Naive thymus-derived CD4-positive, alpha-beta T cell (primary cell): ENCODE measurements at regions of chr1 and their contacts with region 1.

Region 1: GRCh38 chr1:92960395-92961130 is 699 bp downstream of the DIPK1A start:
- DNase-seq: peak in 8 of 9 donors; percentile 57 to 85 (median 76)
- ATAC-seq: peak; percentile 65
- H3K4me3 ChIP-seq: peak overlapping the region; percentile 58
- H3K4me3 Mint-ChIP-seq: peak overlapping the region in 9 of 10 donors; percentile 86 to 97 (median 90)
- H3K27ac ChIP-seq: peak overlapping the region; percentile 100
- H3K27ac Mint-ChIP-seq: peak overlapping the region; percentile 95 to 99 (median 98)
- H3K4me1 ChIP-seq: peaks cover 39 to 55% of the 10 kb centered on the region in 2 donors
- H3K4me1 Mint-ChIP-seq: peaks cover 37 to 46% (median 41%) of the 10 kb centered on the region in 7 donors
- H3K27me3 ChIP-seq: no peaks in the 10 kb centered on the region
- H3K27me3 Mint-ChIP-seq: no peaks in the 10 kb centered on the region

Region 2: DNA sequence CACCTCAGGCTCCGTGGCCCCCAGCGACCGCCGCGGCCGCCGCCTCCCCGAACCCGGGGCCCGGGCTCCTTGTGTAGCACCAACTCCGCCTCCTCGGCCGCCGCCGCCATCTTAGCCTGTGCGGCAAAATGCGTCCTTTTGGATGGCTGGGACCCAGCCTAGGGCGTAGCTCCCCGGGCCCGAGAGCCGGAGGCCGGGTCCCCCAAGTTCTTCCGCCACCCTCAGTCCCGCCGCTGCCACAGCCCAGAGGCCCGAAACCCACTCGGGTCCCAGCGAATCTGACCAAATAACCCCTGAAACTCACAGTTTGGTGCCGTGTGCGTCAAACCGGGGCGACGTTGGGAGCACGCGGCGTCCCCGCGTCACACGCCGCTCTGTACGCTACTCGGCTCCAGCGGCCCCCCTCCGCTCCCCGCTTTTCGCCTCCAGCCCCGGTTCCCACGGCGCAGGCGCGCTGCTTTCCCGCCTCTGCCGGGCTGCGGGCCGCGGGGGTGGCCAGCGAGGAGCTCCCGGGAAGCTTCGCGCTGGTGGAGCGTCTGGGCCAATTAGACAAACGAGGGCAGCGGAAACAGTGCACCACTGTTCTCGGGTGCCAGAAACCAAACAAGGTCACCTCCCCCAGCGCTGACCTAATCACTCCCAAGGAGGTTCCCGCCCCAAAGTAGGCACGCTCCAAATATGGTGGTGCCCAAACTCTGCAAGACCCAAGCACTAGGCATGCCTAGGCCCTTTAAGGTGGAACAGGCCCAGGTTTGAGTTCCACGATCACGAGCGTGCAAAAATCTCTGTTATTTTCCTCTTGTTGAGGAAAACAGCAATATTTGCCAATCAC is 1938.7 kb before region 1 on chr1 and contains the start of gene ZNF644:
- CTCF ChIA-PET with region 1: no interaction called
- POLR2A ChIA-PET with region 1: no interaction called
- intact Hi-C with region 1: loop called in 1 of 2 experiments (anchors 5 kb)
- DNase-seq: peak; percentile 81 to 95 (median 93)
- ATAC-seq: peak; percentile 91
- H3K4me3 ChIP-seq: peak within 1 kb of the TSS; percentile 62
- H3K4me3 Mint-ChIP-seq: peak within 1 kb of the TSS; percentile 90 to 97 (median 96)
- H3K27ac ChIP-seq: peak within 1 kb of the TSS; percentile 99
- H3K27ac Mint-ChIP-seq: peak within 1 kb of the TSS; percentile 95 to 100 (median 98)
- H3K4me1 ChIP-seq: peaks cover 37 to 45% of the 10 kb centered on the region in 2 donors
- H3K4me1 Mint-ChIP-seq: peaks cover 37 to 83% (median 68%) of the 10 kb centered on the region in 7 donors
- H3K27me3 ChIP-seq: no peaks in the 10 kb centered on the region
- H3K27me3 Mint-ChIP-seq: peaks cover 0 to 2% (median 0%) of the 10 kb centered on the region in 5 donors
- total RNA-seq, gene ZNF644: 63.5 to 117 (median 85.2) TPM

Region 3: GRCh38 chr1:92858564-92859399 is 101.8 kb before region 1 on chr1:
- CTCF ChIA-PET with region 1: interaction called, 109 read pairs
- POLR2A ChIA-PET with region 1: interaction called, 31 read pairs
- intact Hi-C with region 1: loop called (anchors 1 kb)
- DNase-seq: peak in 8 of 9 donors; percentile 32 to 86 (median 80)
- ATAC-seq: peak; percentile 100
- H3K4me3 ChIP-seq: peak overlapping the region; percentile 17
- H3K4me3 Mint-ChIP-seq: peak overlapping the region; percentile 5 to 80 (median 70)
- H3K27ac ChIP-seq: peak overlapping the region; percentile 43
- H3K27ac Mint-ChIP-seq: peak overlapping the region; percentile 29 to 83 (median 55)
- H3K4me1 ChIP-seq: peaks cover 0 to 3% of the 10 kb centered on the region in 2 donors
- H3K4me1 Mint-ChIP-seq: peaks cover 15 to 32% (median 22%) of the 10 kb centered on the region in 7 donors
- H3K27me3 ChIP-seq: no peaks in the 10 kb centered on the region
- H3K27me3 Mint-ChIP-seq: no peaks in the 10 kb centered on the region

Region 4: GRCh38 chr1:92980732-92981647 is 20.4 kb after region 1 on chr1:
- CTCF ChIA-PET with region 1: interaction called, 21 read pairs
- POLR2A ChIA-PET with region 1: interaction called, 113 read pairs
- intact Hi-C with region 1: loop called (anchors 1 kb)
- DNase-seq: peak in 7 of 9 donors; percentile 69 to 91 (median 86)
- ATAC-seq: peak; percentile 98
- H3K4me3 ChIP-seq: peak overlapping the region; percentile 24
- H3K4me3 Mint-ChIP-seq: peak overlapping the region; percentile 5 to 83 (median 67)
- H3K27ac ChIP-seq: peak overlapping the region; percentile 81
- H3K27ac Mint-ChIP-seq: peak overlapping the region; percentile 93 to 99 (median 98)
- H3K4me1 ChIP-seq: peaks cover 19 to 33% of the 10 kb centered on the region in 2 donors
- H3K4me1 Mint-ChIP-seq: peaks cover 13 to 62% (median 26%) of the 10 kb centered on the region in 7 donors
- H3K27me3 ChIP-seq: no peaks in the 10 kb centered on the region
- H3K27me3 Mint-ChIP-seq: no peaks in the 10 kb centered on the region

Region 5: GRCh38 chr1:93042187-93043056 is 81.9 kb after region 1 on chr1:
- CTCF ChIA-PET with region 1: no interaction called
- POLR2A ChIA-PET with region 1: no interaction called
- intact Hi-C with region 1: loop called in 1 of 2 experiments (anchors 1 kb)
- DNase-seq: peak in 8 of 9 donors; percentile 27 to 87 (median 79)
- ATAC-seq: peak; percentile 99
- H3K4me3 ChIP-seq: peak overlapping the region; percentile 38
- H3K4me3 Mint-ChIP-seq: peak overlapping the region; percentile 42 to 89 (median 82)
- H3K27ac ChIP-seq: peak overlapping the region; percentile 78
- H3K27ac Mint-ChIP-seq: peak overlapping the region; percentile 88 to 98 (median 94)
- H3K4me1 ChIP-seq: peaks cover 9 to 10% of the 10 kb centered on the region in 2 donors
- H3K4me1 Mint-ChIP-seq: peaks cover 7 to 38% (median 14%) of the 10 kb centered on the region in 7 donors
- H3K27me3 ChIP-seq: no peaks in the 10 kb centered on the region
- H3K27me3 Mint-ChIP-seq: no peaks in the 10 kb centered on the region

Region 6: DNA sequence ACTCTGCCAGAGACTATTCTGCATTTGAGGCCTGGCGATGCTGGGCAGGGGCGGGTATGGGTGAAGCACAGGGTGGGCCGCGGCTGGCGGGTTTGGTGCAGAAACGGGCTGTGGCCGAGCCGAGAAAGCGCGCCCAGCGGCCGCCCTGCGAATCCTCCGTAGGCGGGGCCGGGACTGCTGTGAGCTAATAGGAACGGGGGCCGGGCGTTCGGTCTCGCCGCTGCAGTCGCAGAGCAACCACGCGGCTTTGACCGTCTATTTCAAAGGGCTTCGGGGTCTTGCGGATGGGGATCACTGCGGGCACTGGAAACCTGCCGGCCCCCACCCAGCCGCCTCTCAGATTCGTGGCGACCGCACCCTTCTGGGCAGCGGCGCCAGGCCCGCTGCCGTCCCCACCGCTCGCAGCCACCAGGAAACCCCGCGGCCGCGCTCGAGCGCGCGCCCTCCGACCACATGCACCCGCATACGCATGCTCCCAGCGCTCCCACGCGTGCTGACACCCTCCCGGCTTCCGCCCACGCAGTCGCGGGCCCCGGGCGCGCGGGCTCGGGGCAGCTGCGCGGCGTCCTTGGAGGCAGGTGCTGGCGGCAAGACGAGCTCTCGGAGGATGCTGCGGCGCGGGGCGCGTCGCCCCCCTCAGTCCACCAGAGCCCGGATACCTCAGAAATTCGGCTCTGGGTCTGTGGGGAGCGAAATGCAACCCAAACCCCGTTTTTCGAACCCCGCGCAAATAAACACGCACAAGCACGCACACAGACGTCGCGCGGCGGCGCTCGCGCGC is 885.8 kb after region 1 on chr1:
- CTCF ChIA-PET with region 1: no interaction called
- POLR2A ChIA-PET with region 1: interaction called, 4 read pairs
- intact Hi-C with region 1: loop called (anchors 1 to 2 kb)
- DNase-seq: peak; percentile 78 to 91 (median 89)
- ATAC-seq: peak; percentile 71
- H3K4me3 ChIP-seq: peak overlapping the region; percentile 90
- H3K4me3 Mint-ChIP-seq: peak overlapping the region; percentile 86 to 97 (median 91)
- H3K27ac ChIP-seq: peak overlapping the region; percentile 88
- H3K27ac Mint-ChIP-seq: peak overlapping the region; percentile 86 to 100 (median 96)
- H3K4me1 ChIP-seq: peaks cover 4 to 16% of the 10 kb centered on the region in 2 donors
- H3K4me1 Mint-ChIP-seq: peaks cover 15 to 36% (median 24%) of the 10 kb centered on the region in 7 donors
- H3K27me3 ChIP-seq: no peaks in the 10 kb centered on the region
- H3K27me3 Mint-ChIP-seq: peaks cover 0 to 13% (median 0%) of the 10 kb centered on the region in 5 donors